Right ventricle myocardium superior (tissue), 1 donor: ENCODE measurements at regions of chr1 and their contacts with region 1.

Region 1: DNA sequence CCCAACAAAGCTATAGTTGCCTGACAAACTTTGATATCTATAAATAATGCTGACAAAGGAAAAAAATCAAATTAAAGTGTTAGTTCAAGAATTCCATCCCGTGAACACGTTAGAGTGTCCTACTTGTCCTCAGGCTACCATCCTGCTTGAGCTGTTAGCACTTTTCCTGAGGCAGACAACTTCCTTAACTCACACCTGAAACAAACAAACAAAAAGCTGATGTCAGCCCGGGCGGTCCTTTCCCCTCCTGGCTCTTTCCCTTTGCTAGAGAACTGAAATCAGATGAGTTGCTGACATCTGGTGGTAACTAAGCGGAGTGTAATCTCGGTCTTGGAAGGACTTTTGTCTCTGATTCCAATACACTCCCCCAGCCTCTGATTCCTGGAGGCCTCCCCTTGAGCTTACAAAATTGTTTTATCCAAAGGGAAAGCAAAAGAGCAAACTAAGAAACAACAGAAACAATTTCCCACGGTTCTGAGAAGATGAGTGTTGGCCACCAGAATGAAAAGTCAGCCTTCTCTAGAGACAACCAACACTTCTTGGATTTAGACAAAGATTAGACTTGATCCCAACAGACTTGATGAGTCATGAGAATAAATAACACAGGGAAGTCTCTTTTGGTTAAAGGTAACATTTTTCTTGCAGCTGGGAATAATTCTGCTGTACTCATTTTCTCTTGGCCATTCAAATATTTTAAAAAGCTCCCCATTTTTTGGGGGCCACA is 135.4 kb downstream of the PROX1 start:
- DNase-seq: no peak
- ATAC-seq: peak; percentile 91

Region 2: DNA sequence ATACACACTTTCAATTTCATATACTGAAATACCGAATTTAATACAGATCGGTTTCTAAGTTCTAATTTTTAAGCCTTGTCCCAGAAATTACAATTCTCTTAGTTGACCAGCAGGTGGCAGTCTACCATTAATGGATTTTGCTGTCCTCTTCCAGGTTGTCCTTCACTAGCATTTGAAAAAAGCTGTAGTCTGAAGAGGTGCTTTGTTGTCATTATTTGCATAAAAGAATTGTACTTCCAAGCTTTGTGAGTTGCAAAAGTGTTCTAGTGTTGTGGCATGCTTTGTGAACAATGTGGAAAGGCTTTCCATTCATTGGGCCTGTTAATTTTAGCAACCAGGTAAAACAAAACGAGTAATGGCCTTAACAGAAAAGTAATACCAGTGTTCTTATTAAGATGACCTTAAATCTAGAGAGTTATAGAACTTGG is 878.5 kb before region 1 on chr1:
- intact Hi-C with region 1: loop called (anchors 10 kb)
- DNase-seq: no peak
- ATAC-seq: peak; percentile 53

Region 3: GRCh38 chr1:213374369-213374768 is 748.9 kb before region 1 on chr1:
- intact Hi-C with region 1: loop called (anchors 5 kb)
- DNase-seq: peak; percentile 47
- ATAC-seq: peak; percentile 84

Region 4: DNA sequence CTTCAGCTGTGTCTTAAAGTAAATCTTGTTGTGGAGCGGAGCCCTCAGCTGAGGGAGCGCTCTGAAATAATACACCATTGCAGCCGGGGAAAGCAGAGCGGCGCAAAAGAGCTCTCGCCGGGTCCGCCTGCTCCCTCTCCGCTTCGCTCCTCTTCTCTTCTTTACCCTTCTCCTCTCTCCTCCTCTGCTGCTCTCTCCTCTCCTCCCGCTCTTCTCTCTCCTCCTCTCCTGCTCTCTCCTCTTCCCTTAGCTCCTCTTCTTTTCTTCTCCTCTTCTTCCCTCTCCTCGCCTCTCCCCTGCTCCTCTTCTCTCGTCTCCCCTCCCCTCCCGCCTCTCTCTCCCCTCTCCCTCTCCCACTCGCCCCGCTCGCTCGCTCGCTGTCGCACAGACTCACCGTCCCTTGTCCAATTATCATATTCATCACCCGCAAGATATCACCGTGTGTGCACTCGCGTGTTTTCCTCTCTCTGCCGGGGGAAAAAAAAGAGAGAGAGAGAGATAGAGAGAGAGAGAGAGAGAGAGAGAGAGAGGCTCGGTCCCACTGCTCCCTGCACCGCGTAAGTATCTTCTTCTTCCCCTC is 135.2 kb before region 1 on chr1 and contains the start of gene PROX1:
- intact Hi-C with region 1: loop called (anchors 5 kb)
- DNase-seq: no peak
- ATAC-seq: peak; percentile 82
- total RNA-seq, gene PROX1: 85.2 TPM

Region 5: DNA sequence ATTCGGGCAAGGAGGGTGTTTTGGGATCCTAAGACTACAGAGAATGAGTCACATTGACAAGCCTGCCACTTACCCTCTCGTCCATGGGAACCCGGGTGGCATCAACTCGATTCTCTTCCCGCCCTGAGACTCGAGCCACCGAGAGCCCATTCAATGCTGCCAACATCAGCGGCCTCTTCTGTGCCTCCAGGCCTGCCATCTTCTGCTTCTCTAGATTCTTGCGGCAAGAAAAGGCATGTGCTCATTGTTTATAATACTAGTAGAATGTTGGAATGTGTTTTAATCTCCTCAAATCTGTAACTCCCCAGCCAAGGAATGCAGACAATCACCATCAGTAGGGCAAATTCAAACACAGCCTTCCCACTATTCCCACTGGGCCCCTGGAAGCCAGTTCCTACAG is 254.7 kb after region 1 on chr1:
- intact Hi-C with region 1: no loop called
- DNase-seq: no peak
- ATAC-seq: no peak